ENCODE measurements at regions of chr12 and their contacts with region 1.

Region 1: GRCh38 chr12:54398995-54399793 is 14.7 kb upstream of the ZNF385A start:
- DNase-seq: peak; percentile 92
- H3K4me3 Mint-ChIP-seq: no peak overlapping the region
- H3K27ac Mint-ChIP-seq: peak overlapping the region; percentile 35
- H3K4me1 Mint-ChIP-seq: peaks cover 16% of the 10 kb centered on the region
- H3K27me3 Mint-ChIP-seq: no peaks in the 10 kb centered on the region

Region 2: DNA sequence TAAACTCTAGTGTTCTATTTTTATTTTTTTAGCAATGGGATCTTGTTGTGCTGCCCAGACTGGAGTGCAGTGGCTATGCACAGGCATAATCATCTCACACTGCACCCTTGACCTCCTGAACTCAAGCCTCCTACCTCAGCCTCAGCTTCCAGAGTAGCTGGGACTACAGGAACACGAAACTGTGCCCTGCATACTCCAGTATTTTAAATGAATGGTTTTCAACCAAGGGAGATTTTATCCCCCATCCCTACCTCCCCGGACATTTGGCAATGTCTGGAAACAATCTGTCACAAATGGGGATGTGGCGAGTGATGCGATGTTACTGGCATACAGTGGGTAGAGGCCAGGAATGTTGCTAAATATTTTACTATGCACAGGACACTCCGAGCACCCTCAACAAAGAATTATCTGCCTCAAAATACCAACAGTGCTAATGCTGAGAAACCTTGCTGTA is 121.3 kb before region 1 on chr12:
- CTCF ChIA-PET with region 1: no interaction called
- DNase-seq: no peak
- H3K4me3 Mint-ChIP-seq: no peak overlapping the region
- H3K27ac Mint-ChIP-seq: no peak overlapping the region
- H3K4me1 Mint-ChIP-seq: peaks cover 50% of the 10 kb centered on the region
- H3K27me3 Mint-ChIP-seq: no peaks in the 10 kb centered on the region

Region 3: GRCh38 chr12:54379401-54380201 is 19.6 kb before region 1 on chr12:
- CTCF ChIA-PET with region 1: interaction called, 40 read pairs
- DNase-seq: peak; percentile 94
- H3K4me3 Mint-ChIP-seq: peak overlapping the region; percentile 41
- H3K27ac Mint-ChIP-seq: no peak overlapping the region
- H3K4me1 Mint-ChIP-seq: peaks cover 9% of the 10 kb centered on the region
- H3K27me3 Mint-ChIP-seq: peaks cover 48% of the 10 kb centered on the region

Region 4: DNA sequence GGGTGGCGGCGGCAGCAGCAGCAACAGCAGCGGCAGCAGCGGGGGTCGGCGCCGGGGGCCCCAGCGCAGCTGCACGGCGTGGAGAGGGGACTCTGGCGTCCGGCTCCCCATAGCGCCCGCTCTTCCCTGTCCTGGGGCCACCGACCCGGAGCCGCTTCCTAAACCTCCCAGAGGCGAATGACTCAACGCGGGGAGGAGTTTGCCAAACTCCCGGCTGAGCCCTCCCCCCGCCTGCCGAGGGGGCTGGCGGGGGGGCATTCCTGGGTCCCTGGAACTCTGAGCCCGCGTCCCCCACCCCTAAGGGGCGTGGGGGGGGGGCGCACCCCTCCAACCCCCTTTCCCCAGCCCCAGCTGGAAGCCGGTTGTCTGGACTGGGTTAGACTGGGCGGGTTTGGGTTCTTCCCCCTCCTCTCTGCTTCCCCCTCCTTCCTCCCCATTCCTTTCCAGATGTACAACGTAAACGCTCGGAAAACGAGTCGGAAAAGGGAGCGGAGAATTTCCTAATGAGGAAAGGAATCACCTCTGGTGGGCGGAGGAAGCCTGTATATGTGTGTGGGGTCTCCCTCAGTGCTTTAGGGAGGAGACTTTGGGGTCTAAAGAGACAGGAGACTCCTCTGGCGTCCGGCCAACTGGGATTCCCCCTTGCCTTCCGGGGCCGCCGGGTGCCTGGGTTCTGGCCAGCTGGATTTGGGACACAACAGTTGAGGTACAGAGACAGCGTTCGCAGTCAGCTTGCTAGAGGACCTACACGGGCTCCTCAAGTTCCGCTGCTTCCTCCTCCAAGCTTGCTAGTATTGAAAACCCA is 20.1 kb after region 1 on chr12 and contains the start of gene ITGA5:
- CTCF ChIA-PET with region 1: interaction called, 204 read pairs
- DNase-seq: peak; percentile 59
- H3K4me3 Mint-ChIP-seq: peak within 1 kb of the TSS; percentile 83
- H3K27ac Mint-ChIP-seq: peak within 1 kb of the TSS; percentile 92
- H3K4me1 Mint-ChIP-seq: peaks cover 58% of the 10 kb centered on the region
- H3K27me3 Mint-ChIP-seq: peaks cover 51% of the 10 kb centered on the region

Region 5: GRCh38 chr12:54431911-54432814 is 33.0 kb after region 1 on chr12:
- CTCF ChIA-PET with region 1: interaction called, 519 read pairs
- DNase-seq: peak; percentile 44
- H3K4me3 Mint-ChIP-seq: peak overlapping the region; percentile 42
- H3K27ac Mint-ChIP-seq: peak overlapping the region; percentile 4
- H3K4me1 Mint-ChIP-seq: peaks cover 48% of the 10 kb centered on the region
- H3K27me3 Mint-ChIP-seq: peaks cover 57% of the 10 kb centered on the region

Region 6: DNA sequence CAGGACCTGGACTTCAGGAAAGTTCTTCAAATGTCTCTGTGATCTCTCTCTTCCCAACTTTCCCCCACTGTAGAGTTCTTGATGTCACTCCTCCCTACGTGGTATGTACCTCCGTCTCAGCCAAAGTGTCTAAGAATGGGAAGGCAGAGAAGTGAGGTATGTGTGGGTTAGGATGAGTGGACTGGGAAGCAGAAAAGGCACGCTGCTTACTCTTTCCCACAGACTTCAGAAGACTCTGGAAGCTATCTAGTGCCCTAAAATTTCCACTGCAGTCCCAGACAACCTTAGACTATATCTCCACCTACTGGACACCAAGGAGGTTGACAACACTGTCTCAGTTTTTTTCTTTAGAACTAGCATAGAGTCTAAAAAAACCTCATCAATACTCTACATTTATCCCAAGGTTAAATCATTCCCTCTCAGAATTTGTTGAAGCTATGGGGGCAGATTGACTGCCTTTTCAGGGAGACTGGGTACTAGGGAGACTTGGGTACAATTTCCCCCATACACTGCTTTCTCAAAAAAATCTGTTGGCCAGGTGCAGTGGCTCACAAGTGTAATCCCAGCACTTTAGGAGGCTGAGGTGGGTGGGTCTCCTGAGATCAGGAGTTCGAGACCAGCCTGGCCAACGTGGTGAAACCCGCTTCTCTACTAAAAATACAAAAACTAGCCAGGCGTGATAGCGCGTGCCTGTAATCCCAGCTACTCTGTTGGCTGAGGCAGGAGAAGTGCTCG is 40.5 kb after region 1 on chr12:
- CTCF ChIA-PET with region 1: interaction called, 519 read pairs
- DNase-seq: no peak
- H3K4me3 Mint-ChIP-seq: no peak overlapping the region
- H3K27ac Mint-ChIP-seq: peak overlapping the region; percentile 28
- H3K4me1 Mint-ChIP-seq: peaks cover 8% of the 10 kb centered on the region
- H3K27me3 Mint-ChIP-seq: peaks cover 28% of the 10 kb centered on the region

Region 7: GRCh38 chr12:54448344-54448743 is 49.1 kb after region 1 on chr12:
- CTCF ChIA-PET with region 1: interaction called, 519 read pairs
- DNase-seq: no peak
- H3K4me3 Mint-ChIP-seq: no peak overlapping the region
- H3K27ac Mint-ChIP-seq: no peak overlapping the region
- H3K4me1 Mint-ChIP-seq: no peaks in the 10 kb centered on the region
- H3K27me3 Mint-ChIP-seq: peaks cover 36% of the 10 kb centered on the region

Region 8: GRCh38 chr12:54497883-54498282 is 98.7 kb after region 1 on chr12:
- CTCF ChIA-PET with region 1: interaction called, 10 read pairs
- DNase-seq: no peak
- H3K4me3 Mint-ChIP-seq: peak overlapping the region; percentile 99
- H3K27ac Mint-ChIP-seq: peak overlapping the region; percentile 96
- H3K4me1 Mint-ChIP-seq: peaks cover 43% of the 10 kb centered on the region
- H3K27me3 Mint-ChIP-seq: no peaks in the 10 kb centered on the region

Region 9: DNA sequence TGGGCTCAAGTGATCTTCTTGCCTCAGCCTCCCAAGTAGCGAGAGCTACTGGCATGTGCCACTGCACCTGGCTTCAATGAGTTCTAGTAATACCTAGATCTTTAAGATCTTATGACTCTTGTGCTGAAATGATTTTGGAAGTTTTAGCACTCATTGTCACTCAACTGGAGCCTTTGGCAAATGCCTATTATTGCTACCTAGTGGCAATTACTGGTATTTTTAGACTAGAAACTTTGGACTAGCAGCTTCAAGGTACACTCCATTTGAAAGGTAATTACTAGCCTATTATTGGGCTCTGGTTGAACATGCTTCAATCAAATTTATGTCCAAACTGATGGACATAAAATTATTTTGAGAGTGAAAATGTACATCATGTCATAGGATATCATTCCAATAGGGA is 374.4 kb after region 1 on chr12:
- CTCF ChIA-PET with region 1: no interaction called
- DNase-seq: no peak
- H3K4me3 Mint-ChIP-seq: no peak overlapping the region
- H3K27ac Mint-ChIP-seq: no peak overlapping the region
- H3K4me1 Mint-ChIP-seq: peaks cover 26% of the 10 kb centered on the region
- H3K27me3 Mint-ChIP-seq: peaks cover 3% of the 10 kb centered on the region